OCI-LY7 (cell line): ENCODE measurements at regions of chr1 and their contacts with region 1.

Region 1: DNA sequence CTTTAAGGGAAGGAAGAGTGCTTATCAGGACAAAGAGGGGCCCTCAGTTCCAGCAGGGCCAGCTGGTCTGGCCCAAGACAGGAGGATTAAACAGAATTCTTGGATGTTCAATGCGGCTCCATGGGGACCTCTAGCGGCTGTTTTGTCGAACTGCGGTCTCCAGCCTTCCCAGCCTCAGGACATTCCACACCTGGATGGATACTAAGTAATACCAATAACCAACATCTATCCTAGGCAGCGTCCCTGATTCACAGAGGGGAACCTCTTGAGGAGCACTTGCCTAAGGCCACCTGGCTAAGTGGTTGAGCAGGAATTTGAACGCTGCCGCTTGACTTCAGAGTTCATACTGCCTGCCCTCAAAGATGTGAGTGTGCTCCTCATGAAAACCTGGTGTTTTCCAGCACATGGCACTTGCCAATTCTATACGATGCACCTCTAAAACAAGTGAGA is 15.5 kb upstream of the CD247 start:
- DNase-seq: peak; percentile 73
- H3K4me3 ChIP-seq: no peak overlapping the region
- H3K27ac ChIP-seq: no peak overlapping the region
- H3K4me1 ChIP-seq: peaks cover 6% of the 10 kb centered on the region
- CTCF ChIP-seq: peak; percentile 99

Region 2: GRCh38 chr1:166910396-166910994 is 623.4 kb before region 1 on chr1:
- CTCF ChIA-PET with region 1: no interaction called
- POLR2A ChIA-PET with region 1: no interaction called
- intact Hi-C with region 1: loop called (anchors 10 kb)
- DNase-seq: peak; percentile 88
- H3K4me3 ChIP-seq: no peak overlapping the region
- H3K27ac ChIP-seq: no peak overlapping the region
- H3K4me1 ChIP-seq: peaks cover 6% of the 10 kb centered on the region
- CTCF ChIP-seq: peak; percentile 97

Region 3: DNA sequence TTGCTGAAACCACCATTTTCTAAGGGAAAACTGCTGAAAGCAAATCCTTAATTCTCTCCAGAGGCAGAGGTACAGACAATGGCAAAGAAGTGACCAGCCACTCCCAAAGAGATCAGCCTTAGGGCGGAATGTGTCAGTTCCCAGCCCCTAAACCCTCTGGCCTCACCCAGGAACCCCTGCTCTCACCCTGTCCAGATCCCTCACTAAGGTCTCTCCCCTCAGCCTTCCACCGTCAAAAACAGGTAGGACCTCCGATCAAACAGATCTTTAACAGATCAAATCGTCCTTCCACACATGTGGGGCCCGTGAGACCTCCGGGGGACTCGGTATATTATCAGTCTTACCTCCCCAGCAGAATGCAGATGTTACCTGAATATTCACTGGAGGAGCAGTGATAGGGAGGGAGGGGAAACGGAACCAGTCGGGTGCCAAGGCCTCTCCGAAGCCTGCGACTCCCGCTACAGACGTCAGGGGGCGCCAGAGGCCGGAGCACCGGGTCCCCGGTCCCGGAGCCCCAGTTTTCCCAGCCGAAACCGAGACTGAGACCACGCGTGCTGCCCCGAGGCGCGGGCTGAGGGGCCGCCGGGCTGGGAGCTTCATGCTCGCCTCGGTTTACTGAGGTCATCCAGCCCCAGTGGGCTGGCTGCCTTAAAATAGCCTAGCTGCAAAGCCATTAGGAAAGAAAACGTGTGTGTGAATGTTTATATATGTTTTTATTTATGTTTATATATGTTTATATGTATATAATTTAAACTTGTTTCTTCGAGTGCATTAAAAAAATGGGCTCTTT is 467.3 kb before region 1 on chr1:
- CTCF ChIA-PET with region 1: no interaction called
- POLR2A ChIA-PET with region 1: interaction called, 3 read pairs
- intact Hi-C with region 1: loop called (anchors 2 kb)
- DNase-seq: peak; percentile 73
- H3K4me3 ChIP-seq: peak overlapping the region; percentile 44
- H3K27ac ChIP-seq: no peak overlapping the region
- H3K4me1 ChIP-seq: no peaks in the 10 kb centered on the region
- CTCF ChIP-seq: peak; percentile 96

Region 4: GRCh38 chr1:167371030-167371429 is 162.8 kb before region 1 on chr1:
- CTCF ChIA-PET with region 1: no interaction called
- POLR2A ChIA-PET with region 1: no interaction called
- intact Hi-C with region 1: no loop called
- DNase-seq: no peak
- H3K4me3 ChIP-seq: no peak overlapping the region
- H3K27ac ChIP-seq: no peak overlapping the region
- H3K4me1 ChIP-seq: no peaks in the 10 kb centered on the region
- CTCF ChIP-seq: no peak

Region 5: GRCh38 chr1:167401260-167401873 is 132.5 kb before region 1 on chr1:
- CTCF ChIA-PET with region 1: interaction called, 5 read pairs
- POLR2A ChIA-PET with region 1: no interaction called
- intact Hi-C with region 1: loop called (anchors 1 kb)
- DNase-seq: peak; percentile 70
- H3K4me3 ChIP-seq: no peak overlapping the region
- H3K27ac ChIP-seq: no peak overlapping the region
- H3K4me1 ChIP-seq: peaks cover 11% of the 10 kb centered on the region
- CTCF ChIP-seq: peak; percentile 83

Region 6: GRCh38 chr1:167605576-167605975 is 71.7 kb after region 1 on chr1:
- CTCF ChIA-PET with region 1: no interaction called
- POLR2A ChIA-PET with region 1: no interaction called
- intact Hi-C with region 1: no loop called
- DNase-seq: no peak
- H3K4me3 ChIP-seq: no peak overlapping the region
- H3K27ac ChIP-seq: no peak overlapping the region
- H3K4me1 ChIP-seq: peaks cover 30% of the 10 kb centered on the region
- CTCF ChIP-seq: no peak